MCF 10A (cell line): ENCODE measurements at regions of chr10 and their contacts with region 1.

Region 1: GRCh38 chr10:5629303-5630111 is 36.9 kb downstream of the ASB13 start:
- DNase-seq: peak; percentile 80
- H3K4me3 Mint-ChIP-seq: no peak overlapping the region
- H3K27ac Mint-ChIP-seq: no peak overlapping the region
- H3K4me1 Mint-ChIP-seq: peaks cover 31% of the 10 kb centered on the region
- H3K27me3 Mint-ChIP-seq: no peaks in the 10 kb centered on the region
- CTCF ChIP-seq: peak; percentile 83

Region 2: DNA sequence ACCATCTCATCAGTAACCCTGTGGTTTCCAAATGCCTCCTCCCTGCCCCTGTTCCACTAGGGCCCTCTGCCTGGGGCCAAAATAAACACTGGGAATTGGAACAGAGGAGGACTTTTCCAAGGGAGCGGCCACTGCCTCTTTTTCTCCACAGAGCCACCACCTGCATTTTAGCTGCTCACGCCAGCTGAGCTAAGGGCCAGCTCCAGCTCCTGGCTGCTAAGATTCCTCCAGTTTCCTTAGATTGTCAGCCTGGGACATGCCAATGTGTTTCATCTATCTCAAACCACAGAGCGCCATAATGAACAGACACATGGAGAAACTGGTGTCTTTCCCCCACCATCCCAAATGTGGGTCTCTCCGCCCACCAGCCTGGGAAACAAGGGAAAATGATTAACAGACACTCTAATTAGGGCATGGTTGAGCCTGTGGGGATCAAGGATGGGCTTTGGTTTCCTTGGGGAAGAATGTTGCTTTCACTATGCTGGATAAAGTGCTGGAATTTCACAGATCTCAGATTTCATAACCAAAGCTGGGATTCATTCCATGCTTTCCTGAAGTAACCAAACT is 15.3 kb before region 1 on chr10:
- CTCF ChIA-PET with region 1: interaction called, 10 read pairs
- POLR2A ChIA-PET with region 1: interaction called, 7 read pairs
- intact Hi-C with region 1: no loop called
- DNase-seq: peak; percentile 86
- H3K4me3 Mint-ChIP-seq: peak overlapping the region; percentile 19
- H3K27ac Mint-ChIP-seq: peak overlapping the region; percentile 93
- H3K4me1 Mint-ChIP-seq: peaks cover 72% of the 10 kb centered on the region
- H3K27me3 Mint-ChIP-seq: no peaks in the 10 kb centered on the region
- CTCF ChIP-seq: no peak

Region 3: GRCh38 chr10:5659702-5660528 is 30.4 kb after region 1 on chr10:
- CTCF ChIA-PET with region 1: interaction called, 6 read pairs
- POLR2A ChIA-PET with region 1: interaction called, 15 read pairs
- intact Hi-C with region 1: no loop called
- DNase-seq: peak; percentile 87
- H3K4me3 Mint-ChIP-seq: peak overlapping the region; percentile 5
- H3K27ac Mint-ChIP-seq: peak overlapping the region; percentile 16
- H3K4me1 Mint-ChIP-seq: peaks cover 36% of the 10 kb centered on the region
- H3K27me3 Mint-ChIP-seq: no peaks in the 10 kb centered on the region
- CTCF ChIP-seq: no peak

Region 4: GRCh38 chr10:5666008-5666829 is 36.7 kb after region 1 on chr10 and contains the start of gene ASB13:
- CTCF ChIA-PET with region 1: interaction called, 4 read pairs
- POLR2A ChIA-PET with region 1: interaction called, 15 read pairs
- intact Hi-C with region 1: no loop called
- DNase-seq: peak; percentile 63
- H3K4me3 Mint-ChIP-seq: peak within 1 kb of the TSS; percentile 78
- H3K27ac Mint-ChIP-seq: peak within 1 kb of the TSS; percentile 69
- H3K4me1 Mint-ChIP-seq: peaks cover 16% of the 10 kb centered on the region
- H3K27me3 Mint-ChIP-seq: no peaks in the 10 kb centered on the region
- CTCF ChIP-seq: no peak
- total RNA-seq, gene ASB13: 16.3 and 20.7 TPM in 2 replicates

Region 5: GRCh38 chr10:5737352-5737751 is 107.8 kb after region 1 on chr10:
- CTCF ChIA-PET with region 1: no interaction called
- POLR2A ChIA-PET with region 1: no interaction called
- intact Hi-C with region 1: no loop called
- DNase-seq: no peak
- H3K4me3 Mint-ChIP-seq: no peak overlapping the region
- H3K27ac Mint-ChIP-seq: no peak overlapping the region
- H3K4me1 Mint-ChIP-seq: no peaks in the 10 kb centered on the region
- H3K27me3 Mint-ChIP-seq: no peaks in the 10 kb centered on the region
- CTCF ChIP-seq: no peak

Region 6: GRCh38 chr10:5873515-5873995 is 244.0 kb after region 1 on chr10:
- CTCF ChIA-PET with region 1: no interaction called
- POLR2A ChIA-PET with region 1: no interaction called
- intact Hi-C with region 1: loop called (anchors 2 kb)
- DNase-seq: peak; percentile 77
- H3K4me3 Mint-ChIP-seq: no peak overlapping the region
- H3K27ac Mint-ChIP-seq: no peak overlapping the region
- H3K4me1 Mint-ChIP-seq: no peaks in the 10 kb centered on the region
- H3K27me3 Mint-ChIP-seq: no peaks in the 10 kb centered on the region
- CTCF ChIP-seq: peak; percentile 46